ENCODE measurements at regions of chr11 and their contacts with region 1.

Region 1: GRCh38 chr11:19742588-19743292 is 30.1 kb downstream of the NAV2 start:
- DNase-seq: peak; percentile 34 to 81 (median 68)
- ATAC-seq: peak; percentile 69
- H3K4me3 ChIP-seq: no peak overlapping the region
- H3K4me3 Mint-ChIP-seq: no peak overlapping the region
- H3K27ac ChIP-seq: no peak overlapping the region
- H3K27ac Mint-ChIP-seq: no peak overlapping the region
- H3K4me1 ChIP-seq: no peaks in the 10 kb centered on the region
- H3K4me1 Mint-ChIP-seq: no peaks in the 10 kb centered on the region
- H3K27me3 ChIP-seq: no peaks in the 10 kb centered on the region
- H3K27me3 Mint-ChIP-seq: peaks cover 5% of the 10 kb centered on the region
- CTCF ChIP-seq: peak; percentile 68

Region 2: GRCh38 chr11:19071255-19071654 is 671.5 kb before region 1 on chr11:
- CTCF ChIA-PET with region 1: no interaction called
- POLR2A ChIA-PET with region 1: no interaction called
- intact Hi-C with region 1: loop called in 1 of 2 experiments (anchors 10 kb)
- DNase-seq: peak in 8 of 9 experiments; percentile 15 to 81 (median 46)
- ATAC-seq: peak; percentile 90
- H3K4me3 ChIP-seq: no peak overlapping the region
- H3K4me3 Mint-ChIP-seq: peak overlapping the region; percentile 38
- H3K27ac ChIP-seq: no peak overlapping the region
- H3K27ac Mint-ChIP-seq: no peak overlapping the region
- H3K4me1 ChIP-seq: peaks cover 4% of the 10 kb centered on the region
- H3K4me1 Mint-ChIP-seq: peaks cover 5% of the 10 kb centered on the region
- H3K27me3 ChIP-seq: no peaks in the 10 kb centered on the region
- H3K27me3 Mint-ChIP-seq: peaks cover 18% of the 10 kb centered on the region
- CTCF ChIP-seq: peak; percentile 90

Region 3: DNA sequence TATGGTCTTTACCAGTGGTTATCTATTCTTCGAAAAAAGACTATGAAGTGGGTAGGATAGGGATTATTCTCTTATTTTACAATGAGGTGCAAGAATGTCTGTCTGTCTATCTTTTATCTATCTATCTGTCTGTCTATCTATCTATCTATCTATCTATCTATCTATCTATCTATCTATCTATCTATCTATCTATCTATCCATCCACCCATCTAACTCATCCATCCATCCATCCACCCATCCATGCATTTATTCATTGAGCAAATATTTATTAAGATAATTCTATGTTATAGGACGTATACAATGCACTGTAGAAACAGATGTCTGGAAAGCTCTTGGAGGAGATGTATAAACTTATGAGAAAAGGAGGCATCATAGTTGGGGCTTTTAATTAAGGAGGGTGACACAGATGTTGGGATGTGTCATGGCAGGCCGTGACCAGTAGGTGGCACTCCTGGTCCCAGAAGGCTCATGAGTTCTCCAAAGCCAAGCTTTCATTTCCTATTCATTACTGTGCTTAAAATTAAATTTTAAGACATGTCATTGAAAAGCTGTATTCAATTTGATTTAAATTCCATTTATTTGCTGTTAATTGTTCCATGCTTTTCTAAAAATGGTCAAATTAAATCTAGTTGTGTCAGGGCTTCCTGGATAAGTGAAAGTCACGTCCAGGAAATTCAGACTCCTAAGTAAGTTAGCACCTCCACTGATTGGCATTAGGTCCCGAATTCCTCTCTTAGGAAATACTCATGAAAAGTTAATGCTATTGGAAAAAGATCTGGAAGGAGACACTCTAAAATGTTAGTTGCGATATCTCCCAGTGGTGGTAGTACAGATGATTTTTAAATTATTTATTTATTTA is 483.0 kb before region 1 on chr11:
- CTCF ChIA-PET with region 1: no interaction called
- POLR2A ChIA-PET with region 1: no interaction called
- intact Hi-C with region 1: loop called in 1 of 2 experiments (anchors 10 kb)
- DNase-seq: peak; percentile 24 to 73 (median 63)
- ATAC-seq: peak; percentile 75
- H3K4me3 ChIP-seq: no peak overlapping the region
- H3K4me3 Mint-ChIP-seq: no peak overlapping the region
- H3K27ac ChIP-seq: no peak overlapping the region
- H3K27ac Mint-ChIP-seq: no peak overlapping the region
- H3K4me1 ChIP-seq: no peaks in the 10 kb centered on the region
- H3K4me1 Mint-ChIP-seq: no peaks in the 10 kb centered on the region
- H3K27me3 ChIP-seq: no peaks in the 10 kb centered on the region
- H3K27me3 Mint-ChIP-seq: peaks cover 4% of the 10 kb centered on the region
- CTCF ChIP-seq: peak; percentile 90

Region 4: DNA sequence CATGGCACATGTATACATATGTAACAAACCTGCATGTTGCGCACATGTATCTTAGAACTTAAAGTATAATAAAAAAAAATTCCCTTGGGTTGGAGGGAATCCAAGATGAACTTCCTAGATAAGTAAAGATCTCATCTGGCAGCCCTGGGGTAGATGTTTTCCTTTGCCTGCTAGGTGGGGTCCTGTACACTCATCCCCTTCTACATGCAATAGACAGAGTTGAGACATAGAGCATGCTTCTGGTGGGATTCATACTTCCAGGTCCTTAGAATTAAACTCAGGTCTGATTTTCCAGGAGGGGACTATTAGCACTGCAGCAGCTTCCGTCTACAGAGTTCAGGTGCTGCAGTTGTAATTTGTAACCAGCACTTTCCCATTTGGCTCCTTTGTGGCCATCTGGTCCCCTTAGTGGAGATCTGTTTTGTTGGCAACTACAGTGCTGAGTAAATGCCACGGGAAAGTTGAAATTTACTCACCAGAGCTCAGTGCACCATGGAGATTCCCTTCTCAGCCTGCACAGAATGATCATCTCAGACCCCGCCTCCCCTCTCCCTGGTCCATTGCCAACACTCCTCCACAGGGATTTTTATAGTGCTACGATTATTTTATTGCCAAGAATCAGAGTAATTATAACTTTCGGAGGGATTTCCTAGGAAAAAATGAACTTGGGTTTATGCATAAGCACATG is 281.9 kb before region 1 on chr11:
- CTCF ChIA-PET with region 1: no interaction called
- POLR2A ChIA-PET with region 1: no interaction called
- intact Hi-C with region 1: no loop called
- DNase-seq: no peak
- ATAC-seq: no peak
- H3K4me3 ChIP-seq: no peak overlapping the region
- H3K4me3 Mint-ChIP-seq: no peak overlapping the region
- H3K27ac ChIP-seq: no peak overlapping the region
- H3K27ac Mint-ChIP-seq: no peak overlapping the region
- H3K4me1 ChIP-seq: no peaks in the 10 kb centered on the region
- H3K4me1 Mint-ChIP-seq: no peaks in the 10 kb centered on the region
- H3K27me3 ChIP-seq: no peaks in the 10 kb centered on the region
- H3K27me3 Mint-ChIP-seq: peaks cover 5% of the 10 kb centered on the region
- CTCF ChIP-seq: no peak

Region 5: DNA sequence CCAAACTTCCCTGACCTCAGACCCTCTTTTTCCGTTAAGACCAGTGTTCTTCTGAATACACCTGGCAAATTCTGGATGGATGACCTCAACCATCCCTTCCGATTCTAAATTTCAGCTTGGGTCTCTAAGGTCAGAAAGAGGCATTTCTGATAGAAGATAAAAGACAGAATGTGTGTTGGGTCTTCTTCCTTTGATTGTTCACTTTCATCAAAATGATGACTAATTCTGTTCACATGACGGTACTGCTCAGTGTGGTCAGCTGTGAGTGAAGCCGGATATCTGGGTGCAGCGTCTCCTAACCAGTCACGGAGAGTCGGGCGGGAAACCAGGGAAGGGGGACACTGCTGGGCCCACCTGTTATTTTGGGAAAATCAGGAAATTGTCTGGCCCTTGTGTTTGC is 181.7 kb before region 1 on chr11:
- CTCF ChIA-PET with region 1: interaction called, 77 read pairs
- POLR2A ChIA-PET with region 1: no interaction called
- intact Hi-C with region 1: loop called (anchors 1 kb)
- DNase-seq: no peak
- ATAC-seq: no peak
- H3K4me3 ChIP-seq: no peak overlapping the region
- H3K4me3 Mint-ChIP-seq: no peak overlapping the region
- H3K27ac ChIP-seq: no peak overlapping the region
- H3K27ac Mint-ChIP-seq: no peak overlapping the region
- H3K4me1 ChIP-seq: no peaks in the 10 kb centered on the region
- H3K4me1 Mint-ChIP-seq: peaks cover 4% of the 10 kb centered on the region
- H3K27me3 ChIP-seq: no peaks in the 10 kb centered on the region
- H3K27me3 Mint-ChIP-seq: peaks cover 13% of the 10 kb centered on the region
- CTCF ChIP-seq: no peak

Region 6: GRCh38 chr11:19566583-19567379 is 176.0 kb before region 1 on chr11:
- CTCF ChIA-PET with region 1: interaction called, 77 read pairs
- POLR2A ChIA-PET with region 1: no interaction called
- intact Hi-C with region 1: loop called (anchors 1 kb)
- DNase-seq: no peak
- ATAC-seq: no peak
- H3K4me3 ChIP-seq: no peak overlapping the region
- H3K4me3 Mint-ChIP-seq: no peak overlapping the region
- H3K27ac ChIP-seq: no peak overlapping the region
- H3K27ac Mint-ChIP-seq: no peak overlapping the region
- H3K4me1 ChIP-seq: no peaks in the 10 kb centered on the region
- H3K4me1 Mint-ChIP-seq: no peaks in the 10 kb centered on the region
- H3K27me3 ChIP-seq: peaks cover 0 to 3% of the 10 kb centered on the region in 2 experiments
- H3K27me3 Mint-ChIP-seq: peaks cover 14% of the 10 kb centered on the region
- CTCF ChIP-seq: no peak

Region 7: DNA sequence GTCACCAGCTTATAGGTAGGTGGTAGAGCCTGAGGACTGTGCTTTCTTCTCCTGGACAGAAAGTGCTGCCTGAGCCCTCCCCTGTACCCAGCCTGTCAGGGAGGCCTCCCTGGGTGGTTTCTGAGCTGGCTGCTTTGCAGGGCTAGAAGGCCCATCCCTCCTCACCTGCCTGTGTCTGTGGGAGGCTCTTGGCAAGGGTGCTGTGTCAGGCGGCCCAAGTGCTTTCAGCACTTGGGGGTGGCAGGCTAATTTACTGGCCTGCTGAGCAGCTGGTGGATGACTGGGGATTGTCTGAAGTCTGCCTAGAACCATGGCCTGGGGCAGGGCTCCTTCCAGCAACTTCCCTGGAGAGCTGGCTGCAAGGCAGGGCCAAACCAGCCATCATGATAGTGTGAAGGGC is 169.1 kb before region 1 on chr11:
- CTCF ChIA-PET with region 1: interaction called, 10 read pairs
- POLR2A ChIA-PET with region 1: no interaction called
- intact Hi-C with region 1: no loop called
- DNase-seq: no peak
- ATAC-seq: no peak
- H3K4me3 ChIP-seq: no peak overlapping the region
- H3K4me3 Mint-ChIP-seq: no peak overlapping the region
- H3K27ac ChIP-seq: no peak overlapping the region
- H3K27ac Mint-ChIP-seq: no peak overlapping the region
- H3K4me1 ChIP-seq: no peaks in the 10 kb centered on the region
- H3K4me1 Mint-ChIP-seq: no peaks in the 10 kb centered on the region
- H3K27me3 ChIP-seq: peaks cover 0 to 3% of the 10 kb centered on the region in 2 experiments
- H3K27me3 Mint-ChIP-seq: peaks cover 8% of the 10 kb centered on the region
- CTCF ChIP-seq: no peak

Region 8: GRCh38 chr11:19723572-19724342 is 19.0 kb before region 1 on chr11:
- CTCF ChIA-PET with region 1: interaction called, 12 read pairs
- POLR2A ChIA-PET with region 1: no interaction called
- intact Hi-C with region 1: no loop called
- DNase-seq: peak in 8 of 9 experiments; percentile 17 to 81 (median 51)
- ATAC-seq: peak; percentile 87
- H3K4me3 ChIP-seq: no peak overlapping the region
- H3K4me3 Mint-ChIP-seq: peak overlapping the region; percentile 20
- H3K27ac ChIP-seq: peak overlapping the region; percentile 12 to 37
- H3K27ac Mint-ChIP-seq: peak overlapping the region; percentile 82
- H3K4me1 ChIP-seq: peaks cover 25% of the 10 kb centered on the region
- H3K4me1 Mint-ChIP-seq: peaks cover 26% of the 10 kb centered on the region
- H3K27me3 ChIP-seq: no peaks in the 10 kb centered on the region
- H3K27me3 Mint-ChIP-seq: peaks cover under 1% of the 10 kb centered on the region
- CTCF ChIP-seq: no peak